B cell (primary cell): ENCODE measurements at regions of chr3 and their contacts with region 1.

Region 1: GRCh38 chr3:149969940-149970715 is 567 bp downstream of the PFN2 start:
- DNase-seq: peak; percentile 87
- ATAC-seq: peak; percentile 71
- H3K4me3 ChIP-seq: peak overlapping the region; percentile 35 to 78 (median 67)
- H3K4me3 Mint-ChIP-seq: peak overlapping the region; percentile 96
- H3K27ac ChIP-seq: no peak overlapping the region
- H3K27ac Mint-ChIP-seq: peak overlapping the region; percentile 83
- H3K4me1 ChIP-seq: peaks cover 14% of the 10 kb centered on the region in 2 donors
- H3K4me1 Mint-ChIP-seq: peaks cover 22% of the 10 kb centered on the region
- H3K27me3 ChIP-seq: peaks cover 0 to 15% (median 14%) of the 10 kb centered on the region in 4 experiments
- H3K27me3 Mint-ChIP-seq: peaks cover 27% of the 10 kb centered on the region
- CTCF ChIP-seq: no peak

Region 2: GRCh38 chr3:148389916-148390315 is 1580.2 kb before region 1 on chr3:
- CTCF ChIA-PET with region 1: no interaction called
- POLR2A ChIA-PET with region 1: no interaction called
- intact Hi-C with region 1: no loop called
- DNase-seq: no peak
- ATAC-seq: no peak
- H3K4me3 ChIP-seq: no peak overlapping the region
- H3K4me3 Mint-ChIP-seq: no peak overlapping the region
- H3K27ac ChIP-seq: no peak overlapping the region
- H3K27ac Mint-ChIP-seq: no peak overlapping the region
- H3K4me1 ChIP-seq: no peaks in the 10 kb centered on the region
- H3K4me1 Mint-ChIP-seq: no peaks in the 10 kb centered on the region
- H3K27me3 ChIP-seq: no peaks in the 10 kb centered on the region
- H3K27me3 Mint-ChIP-seq: no peaks in the 10 kb centered on the region
- CTCF ChIP-seq: no peak

Region 3: GRCh38 chr3:149752051-149752787 is 217.9 kb before region 1 on chr3 and contains the start of gene COMMD2:
- CTCF ChIA-PET with region 1: no interaction called
- POLR2A ChIA-PET with region 1: no interaction called
- intact Hi-C with region 1: loop called (anchors 5 kb)
- DNase-seq: peak; percentile 86
- ATAC-seq: peak; percentile 95
- H3K4me3 ChIP-seq: peak within 1 kb of the TSS; percentile 69 to 92 (median 83)
- H3K4me3 Mint-ChIP-seq: peak within 1 kb of the TSS; percentile 98
- H3K27ac ChIP-seq: peak within 1 kb of the TSS; percentile 65 to 84
- H3K27ac Mint-ChIP-seq: peak within 1 kb of the TSS; percentile 96
- H3K4me1 ChIP-seq: peaks cover 11 to 15% of the 10 kb centered on the region in 2 donors
- H3K4me1 Mint-ChIP-seq: peaks cover 27% of the 10 kb centered on the region
- H3K27me3 ChIP-seq: no peaks in the 10 kb centered on the region
- H3K27me3 Mint-ChIP-seq: peaks cover 5% of the 10 kb centered on the region
- CTCF ChIP-seq: peak; percentile 68
- total RNA-seq, gene COMMD2: 45.1 and 47.8 TPM in 2 replicates

Region 4: DNA sequence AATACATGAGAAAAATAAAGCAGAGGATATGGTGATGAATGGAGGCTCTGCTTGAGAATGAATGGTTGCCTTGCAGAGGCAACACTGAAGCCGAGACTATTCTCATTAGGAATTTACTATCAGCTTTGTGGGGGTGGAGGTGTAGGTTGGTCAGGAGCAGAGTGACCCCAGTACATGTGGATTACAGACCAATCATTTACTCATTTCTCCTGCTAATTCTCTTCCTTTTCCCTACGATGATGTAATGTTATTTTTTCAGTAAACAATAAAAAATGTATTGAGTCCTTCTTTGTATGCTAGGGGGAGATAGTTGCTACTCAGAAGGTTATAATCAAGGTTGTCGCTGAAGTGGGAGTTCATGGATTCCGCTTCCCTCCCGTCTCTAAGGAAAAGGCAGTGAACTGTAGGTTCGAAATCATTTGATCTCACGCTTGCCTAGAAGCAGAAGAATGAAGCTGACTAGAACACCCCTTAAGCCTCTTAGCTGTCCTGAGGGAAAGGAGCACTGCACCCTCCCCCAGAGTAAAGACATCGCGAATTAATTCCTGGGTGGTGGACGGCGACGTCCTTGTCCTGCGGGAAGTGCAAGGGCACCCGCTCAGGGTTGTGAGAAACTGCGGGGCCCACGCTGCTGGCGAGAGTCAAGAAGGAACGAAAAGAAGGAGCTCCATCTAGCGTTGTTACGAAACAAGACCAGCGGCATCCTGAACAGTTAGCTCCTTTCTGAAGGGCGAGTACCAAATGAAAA is 213.7 kb after region 1 on chr3:
- CTCF ChIA-PET with region 1: interaction called, 30 read pairs
- POLR2A ChIA-PET with region 1: no interaction called
- intact Hi-C with region 1: loop called (anchors 1 kb)
- DNase-seq: peak; percentile 53
- ATAC-seq: peak; percentile 60
- H3K4me3 ChIP-seq: peak overlapping the region in 2 of 5 experiments; percentile 11 to 21
- H3K4me3 Mint-ChIP-seq: no peak overlapping the region
- H3K27ac ChIP-seq: no peak overlapping the region
- H3K27ac Mint-ChIP-seq: no peak overlapping the region
- H3K4me1 ChIP-seq: peaks cover 7 to 8% of the 10 kb centered on the region in 2 donors
- H3K4me1 Mint-ChIP-seq: no peaks in the 10 kb centered on the region
- H3K27me3 ChIP-seq: peaks cover 0 to 9% (median 2%) of the 10 kb centered on the region in 4 experiments
- H3K27me3 Mint-ChIP-seq: peaks cover 17% of the 10 kb centered on the region
- CTCF ChIP-seq: peak; percentile 51

Region 5: GRCh38 chr3:150286390-150287147 is 316.4 kb after region 1 on chr3:
- CTCF ChIA-PET with region 1: no interaction called
- POLR2A ChIA-PET with region 1: no interaction called
- intact Hi-C with region 1: loop called (anchors 5 kb)
- DNase-seq: peak; percentile 68
- ATAC-seq: peak; percentile 79
- H3K4me3 ChIP-seq: no peak overlapping the region
- H3K4me3 Mint-ChIP-seq: no peak overlapping the region
- H3K27ac ChIP-seq: no peak overlapping the region
- H3K27ac Mint-ChIP-seq: no peak overlapping the region
- H3K4me1 ChIP-seq: no peaks in the 10 kb centered on the region
- H3K4me1 Mint-ChIP-seq: no peaks in the 10 kb centered on the region
- H3K27me3 ChIP-seq: no peaks in the 10 kb centered on the region
- H3K27me3 Mint-ChIP-seq: peaks cover 27% of the 10 kb centered on the region
- CTCF ChIP-seq: peak; percentile 73

Region 6: DNA sequence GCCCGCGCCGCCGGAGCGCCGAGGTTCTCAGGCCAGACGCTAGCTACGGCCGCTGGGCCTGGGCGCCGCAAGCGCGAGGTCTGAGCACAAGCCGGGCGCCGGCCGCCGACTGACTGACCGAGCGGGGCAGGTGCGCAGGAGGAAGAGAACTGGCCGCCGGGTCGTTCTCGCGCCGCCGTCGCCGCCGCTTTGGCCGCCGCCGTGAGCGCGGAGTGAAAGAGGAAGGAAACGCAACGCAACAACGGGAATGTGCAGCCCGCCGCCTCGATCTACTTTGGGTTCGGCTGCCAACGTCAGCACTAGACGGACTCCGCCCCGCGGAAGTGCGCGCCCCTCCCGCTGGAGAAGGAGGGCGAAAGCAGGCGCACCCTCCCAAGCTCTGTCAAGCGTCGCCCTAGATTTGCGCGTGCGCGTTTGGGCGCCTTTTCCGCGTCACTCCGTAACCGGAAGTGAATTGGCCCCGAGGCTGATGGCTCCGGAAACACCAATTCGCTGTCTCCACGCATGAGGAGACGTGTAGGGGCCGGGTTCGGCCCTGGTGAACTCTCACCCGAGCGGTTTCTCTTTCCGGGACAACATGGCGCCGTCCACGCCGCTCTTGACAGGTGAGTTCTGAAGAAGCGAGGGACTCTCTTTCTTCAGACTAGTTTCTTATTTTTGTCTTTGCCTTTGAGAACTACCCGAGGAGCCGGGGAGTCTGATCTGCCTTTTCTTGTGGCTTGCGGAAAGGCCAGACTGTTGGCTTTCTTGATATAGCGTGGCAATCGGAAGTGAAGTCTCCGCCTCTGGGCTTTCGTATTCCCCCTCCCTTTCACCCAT is 576.3 kb after region 1 on chr3 and contains the starts of genes EIF2A and SERP1:
- CTCF ChIA-PET with region 1: no interaction called
- POLR2A ChIA-PET with region 1: no interaction called
- intact Hi-C with region 1: loop called (anchors 1 kb)
- DNase-seq: peak; percentile 100
- ATAC-seq: peak; percentile 90
- H3K4me3 ChIP-seq: peak within 1 kb of the TSS; percentile 67 to 96 (median 86)
- H3K4me3 Mint-ChIP-seq: peak within 1 kb of the TSS; percentile 93
- H3K27ac ChIP-seq: peak within 1 kb of the TSS; percentile 87 to 98
- H3K27ac Mint-ChIP-seq: peak within 1 kb of the TSS; percentile 99
- H3K4me1 ChIP-seq: peaks cover 11 to 21% of the 10 kb centered on the region in 2 donors
- H3K4me1 Mint-ChIP-seq: peaks cover 47% of the 10 kb centered on the region
- H3K27me3 ChIP-seq: no peaks in the 10 kb centered on the region
- H3K27me3 Mint-ChIP-seq: no peaks in the 10 kb centered on the region
- CTCF ChIP-seq: no peak
- total RNA-seq, gene EIF2A: 78.8 and 83.1 TPM in 2 replicates
- total RNA-seq, gene SERP1: 78.0 and 84.6 TPM in 2 replicates